GM12878 (cell line): ENCODE measurements at regions of chr20 and their contacts with region 1.

Region 1: GRCh38 chr20:64238851-64239387 is 16.6 kb upstream of the PCMTD2 start:
- DNase-seq: peak; percentile 36
- ATAC-seq: peak; percentile 96
- H3K4me3 ChIP-seq: no peak overlapping the region
- H3K27ac ChIP-seq: peak overlapping the region; percentile 40
- H3K4me1 ChIP-seq: peaks cover 12% of the 10 kb centered on the region
- H3K27me3 ChIP-seq: 0 out of 4 replicates have a peak, but pooled peaks cover 0 to 3% of the 10 kb centered on the region in 2 experiments
- CTCF ChIP-seq: 0 out of 6 replicates have a peak, but pooled peaks of 1 of the 3 experiments have one; percentile 1
- EP300 ChIP-seq: 0 out of 4 replicates have a peak, but pooled peaks of 1 of the 2 experiments have one; percentile 40
- POLR2A ChIP-seq: no peak
- RAD21 ChIP-seq: peak; percentile 24; the same call in 1 of the 2 replicates

Region 2: GRCh38 chr20:64223526-64224067 is 15.3 kb before region 1 on chr20:
- CTCF ChIA-PET with region 1: interaction called, 10 read pairs
- POLR2A ChIA-PET with region 1: no interaction called
- RAD21 ChIA-PET with region 1: interaction called, 3 read pairs
- SMC1A ChIA-PET with region 1: no interaction called
- in situ Hi-C with region 1: no loop called
- intact Hi-C with region 1: no loop called
- DNase-seq: no peak
- ATAC-seq: peak; percentile 79
- H3K4me3 ChIP-seq: no peak overlapping the region
- H3K27ac ChIP-seq: no peak overlapping the region
- H3K4me1 ChIP-seq: no peaks in the 10 kb centered on the region
- H3K27me3 ChIP-seq: peaks cover 0 to 9% of the 10 kb centered on the region in 2 experiments; a peak in 2 of 4 replicates
- CTCF ChIP-seq: peak in 2 of 3 experiments; percentile 50 to 58; a peak in 3 of 6 replicates
- EP300 ChIP-seq: no peak
- POLR2A ChIP-seq: no peak
- RAD21 ChIP-seq: no peak

Region 3: GRCh38 chr20:64279826-64280459 is 41.0 kb after region 1 on chr20:
- CTCF ChIA-PET with region 1: interaction called, 20 read pairs
- POLR2A ChIA-PET with region 1: no interaction called
- RAD21 ChIA-PET with region 1: no interaction called
- SMC1A ChIA-PET with region 1: interaction called, 3 read pairs
- in situ Hi-C with region 1: no loop called
- intact Hi-C with region 1: no loop called
- DNase-seq: no peak
- ATAC-seq: peak; percentile 36
- H3K4me3 ChIP-seq: no peak overlapping the region
- H3K27ac ChIP-seq: no peak overlapping the region
- H3K4me1 ChIP-seq: peaks cover 4% of the 10 kb centered on the region; the same call in 1 of the 2 replicates
- H3K27me3 ChIP-seq: no peaks in the 10 kb centered on the region; a peak in 1 of 4 replicates
- CTCF ChIP-seq: no peak
- EP300 ChIP-seq: no peak
- POLR2A ChIP-seq: no peak
- RAD21 ChIP-seq: no peak